Ovary (tissue), 10 donors: ENCODE measurements at regions of chr6 and their contacts with region 1.

Region 1: GRCh38 chr6:88360203-88360797 is 194.2 kb upstream of the CNR1 start:
- DNase-seq: no peak
- H3K4me3 ChIP-seq: no peak overlapping the region
- H3K27ac ChIP-seq: no peak overlapping the region
- H3K4me1 ChIP-seq: peaks cover 2% of the 10 kb centered on the region
- H3K27me3 ChIP-seq: no peaks in the 10 kb centered on the region
- CTCF ChIP-seq: no peak
- EP300 ChIP-seq: no peak
- POLR2A ChIP-seq: no peak

Region 2: GRCh38 chr6:88165844-88166492 is 194.3 kb before region 1 on chr6 and contains the start of gene CNR1:
- intact Hi-C with region 1: loop called in 1 of 4 experiments (anchors 10 kb)
- DNase-seq: peak in 4 of 5 donors; percentile 26 to 50 (median 40)
- H3K4me3 ChIP-seq: peak within 1 kb of the TSS; percentile 47
- H3K27ac ChIP-seq: no peak within 1 kb of the TSS
- H3K4me1 ChIP-seq: peaks cover 12% of the 10 kb centered on the region
- H3K27me3 ChIP-seq: peaks cover 5% of the 10 kb centered on the region
- CTCF ChIP-seq: no peak
- EP300 ChIP-seq: no peak
- POLR2A ChIP-seq: no peak
- total RNA-seq, gene CNR1: 0.43 to 3.7 (median 1.8) TPM

Region 3: GRCh38 chr6:88246654-88247053 is 113.6 kb before region 1 on chr6:
- intact Hi-C with region 1: no loop called
- DNase-seq: no peak
- H3K4me3 ChIP-seq: no peak overlapping the region
- H3K27ac ChIP-seq: no peak overlapping the region
- H3K4me1 ChIP-seq: no peaks in the 10 kb centered on the region
- H3K27me3 ChIP-seq: no peaks in the 10 kb centered on the region
- CTCF ChIP-seq: no peak
- EP300 ChIP-seq: no peak
- POLR2A ChIP-seq: no peak

Region 4: GRCh38 chr6:88561034-88561953 is 201.0 kb after region 1 on chr6:
- intact Hi-C with region 1: no loop called
- DNase-seq: peak in 1 of 5 donors; percentile 41
- H3K4me3 ChIP-seq: no peak overlapping the region
- H3K27ac ChIP-seq: peak overlapping the region in 1 of 2 donors; percentile 57
- H3K4me1 ChIP-seq: peaks cover 2% of the 10 kb centered on the region
- H3K27me3 ChIP-seq: no peaks in the 10 kb centered on the region
- CTCF ChIP-seq: no peak
- EP300 ChIP-seq: no peak
- POLR2A ChIP-seq: no peak

Region 5: GRCh38 chr6:89411145-89412070 is 1051.1 kb after region 1 on chr6:
- intact Hi-C with region 1: no loop called
- DNase-seq: peak; percentile 26 to 58 (median 47)
- H3K4me3 ChIP-seq: peak overlapping the region; percentile 58
- H3K27ac ChIP-seq: peak overlapping the region in 1 of 2 donors; percentile 18
- H3K4me1 ChIP-seq: peaks cover 2% of the 10 kb centered on the region
- H3K27me3 ChIP-seq: no peaks in the 10 kb centered on the region
- CTCF ChIP-seq: no peak
- EP300 ChIP-seq: no peak
- POLR2A ChIP-seq: no peak